ENCODE measurements at regions of chr20 and their contacts with region 1.

Region 1: GRCh38 chr20:21373436-21373835 is 23.9 kb downstream of the NKX2-4 start:
- DNase-seq: no peak
- ATAC-seq: no peak

Region 2: GRCh38 chr20:21583486-21584168 is 210.2 kb after region 1 on chr20:
- intact Hi-C with region 1: no loop called
- DNase-seq: no peak
- ATAC-seq: no peak

Region 3: GRCh38 chr20:22438932-22439331 is 1065.5 kb after region 1 on chr20:
- intact Hi-C with region 1: loop called (anchors 5 kb)
- DNase-seq: no peak
- ATAC-seq: no peak